ENCODE measurements at regions of chr6 and their contacts with region 1.

Region 1: GRCh38 chr6:12504319-12504966 is 212.1 kb upstream of the PHACTR1 start:
- DNase-seq: no peak
- ATAC-seq: peak; percentile 67
- H3K4me3 Mint-ChIP-seq: no peak overlapping the region
- H3K27ac Mint-ChIP-seq: no peak overlapping the region
- H3K4me1 Mint-ChIP-seq: no peaks in the 10 kb centered on the region
- H3K27me3 Mint-ChIP-seq: peaks cover 3% of the 10 kb centered on the region
- CTCF ChIP-seq: no peak

Region 2: GRCh38 chr6:12150812-12151432 is 353.5 kb before region 1 on chr6:
- CTCF ChIA-PET with region 1: no interaction called
- POLR2A ChIA-PET with region 1: no interaction called
- intact Hi-C with region 1: loop called (anchors 5 kb)
- DNase-seq: no peak
- ATAC-seq: no peak
- H3K4me3 Mint-ChIP-seq: no peak overlapping the region
- H3K27ac Mint-ChIP-seq: no peak overlapping the region
- H3K4me1 Mint-ChIP-seq: peaks cover 16% of the 10 kb centered on the region
- H3K27me3 Mint-ChIP-seq: no peaks in the 10 kb centered on the region
- CTCF ChIP-seq: no peak

Region 3: DNA sequence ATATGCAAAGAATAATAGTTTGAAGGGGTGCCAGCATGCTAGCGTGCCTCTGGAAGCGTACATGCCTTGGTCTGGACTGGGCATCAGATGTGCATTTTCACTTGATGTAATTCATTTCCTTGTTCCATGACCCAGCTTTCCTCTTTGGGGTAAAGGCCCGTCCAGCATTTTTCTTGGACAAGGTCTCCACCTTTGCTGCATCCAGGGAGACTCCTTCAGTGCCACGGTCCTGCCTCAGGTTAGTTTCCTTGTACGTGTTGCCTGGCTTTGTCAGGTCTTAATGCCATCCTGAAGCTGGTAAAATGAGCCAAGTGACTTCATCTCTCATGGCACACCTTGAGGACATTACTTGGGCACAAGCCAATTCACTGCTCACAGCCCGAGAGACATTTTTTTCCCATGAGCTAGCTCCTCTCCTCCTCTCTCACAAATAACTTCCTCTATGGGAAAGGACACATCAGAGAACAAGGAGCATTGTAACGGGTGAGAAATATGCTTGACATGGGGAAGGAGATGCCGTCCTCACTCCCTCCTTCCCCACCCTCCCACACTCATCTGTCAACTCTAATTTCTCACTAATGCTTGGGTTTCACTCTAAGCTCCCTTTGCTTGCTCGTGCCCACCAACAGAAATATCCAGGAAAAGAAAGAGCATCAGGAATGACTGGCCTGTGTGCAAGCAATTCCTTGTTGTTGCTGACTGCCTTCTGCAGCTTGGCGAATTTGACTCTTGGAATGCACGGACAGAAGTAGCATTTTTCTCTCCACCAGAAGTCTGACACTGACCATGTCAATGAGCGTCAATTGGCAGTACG is 190.2 kb before region 1 on chr6:
- CTCF ChIA-PET with region 1: interaction called, 12 read pairs
- POLR2A ChIA-PET with region 1: no interaction called
- intact Hi-C with region 1: loop called (anchors 10 kb)
- DNase-seq: no peak
- ATAC-seq: no peak
- H3K4me3 Mint-ChIP-seq: no peak overlapping the region
- H3K27ac Mint-ChIP-seq: no peak overlapping the region
- H3K4me1 Mint-ChIP-seq: no peaks in the 10 kb centered on the region
- H3K27me3 Mint-ChIP-seq: no peaks in the 10 kb centered on the region
- CTCF ChIP-seq: no peak

Region 4: DNA sequence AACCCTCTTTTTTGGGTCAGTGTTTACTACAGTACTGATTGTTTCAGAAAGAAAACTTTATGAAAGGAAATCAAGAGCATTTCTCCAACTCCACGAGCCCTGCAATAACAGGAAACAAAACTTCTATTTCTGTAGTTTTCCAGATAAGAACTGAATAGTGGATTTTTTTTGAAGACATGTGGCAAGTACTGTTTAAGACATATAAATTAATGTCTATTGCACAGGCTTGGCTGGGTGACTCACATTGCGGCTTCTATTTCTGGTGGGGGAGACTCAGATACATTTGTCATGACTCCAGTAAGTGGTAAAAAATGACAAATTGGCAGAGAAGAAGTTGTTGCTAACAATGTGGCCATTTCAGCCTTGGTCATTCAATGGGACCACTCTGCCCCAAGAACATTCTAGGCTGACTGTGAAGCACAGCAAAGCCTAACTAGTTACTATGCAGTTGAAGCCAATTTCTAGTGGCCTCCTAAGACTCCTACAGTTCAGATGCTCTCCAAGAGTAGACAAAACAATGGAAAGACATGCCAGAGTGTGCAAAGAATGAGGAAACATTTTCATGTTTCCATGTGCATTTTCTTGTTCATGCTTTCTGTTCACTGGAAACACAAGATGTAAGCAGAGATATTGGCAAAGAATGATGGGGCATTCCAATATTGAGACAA is 13.4 kb before region 1 on chr6:
- CTCF ChIA-PET with region 1: no interaction called
- POLR2A ChIA-PET with region 1: no interaction called
- intact Hi-C with region 1: no loop called
- DNase-seq: no peak
- ATAC-seq: no peak
- H3K4me3 Mint-ChIP-seq: no peak overlapping the region
- H3K27ac Mint-ChIP-seq: no peak overlapping the region
- H3K4me1 Mint-ChIP-seq: no peaks in the 10 kb centered on the region
- H3K27me3 Mint-ChIP-seq: peaks cover 4% of the 10 kb centered on the region
- CTCF ChIP-seq: no peak